ENCODE measurements at regions of chr5 and their contacts with region 1.

Region 1: DNA sequence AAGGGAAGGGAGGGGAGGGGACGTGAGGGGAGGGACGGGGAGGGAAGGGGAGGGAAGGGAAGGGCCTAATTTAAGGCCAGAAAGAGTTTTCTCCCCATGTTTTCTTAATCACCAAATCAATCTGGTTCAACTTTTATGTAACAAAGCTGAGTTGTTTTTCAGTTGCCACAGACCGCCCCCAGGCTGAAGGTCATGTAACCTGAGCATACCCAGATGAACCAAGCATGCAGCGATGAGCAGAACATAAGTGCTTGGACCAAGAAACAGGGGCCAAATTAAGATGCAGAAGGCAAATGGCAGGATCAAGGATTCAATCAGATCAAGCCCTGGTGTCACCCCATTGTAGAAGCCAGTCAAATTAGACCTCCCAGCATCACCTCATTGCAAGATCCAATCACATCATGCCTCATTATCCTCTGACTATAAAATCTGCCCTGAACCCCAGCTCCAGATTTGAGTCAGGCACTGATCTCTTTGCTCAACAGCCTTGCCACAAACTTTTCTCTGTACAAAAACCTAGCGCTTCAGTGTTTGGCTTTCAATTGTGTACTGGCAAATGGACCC is 113.5 kb upstream of the TNPO1 start:
- DNase-seq: no peak
- H3K4me3 ChIP-seq: no peak overlapping the region
- H3K27ac ChIP-seq: no peak overlapping the region
- H3K4me1 ChIP-seq: no peaks in the 10 kb centered on the region
- H3K27me3 ChIP-seq: no peaks in the 10 kb centered on the region
- CTCF ChIP-seq: no peak
- POLR2A ChIP-seq: no peak

Region 2: DNA sequence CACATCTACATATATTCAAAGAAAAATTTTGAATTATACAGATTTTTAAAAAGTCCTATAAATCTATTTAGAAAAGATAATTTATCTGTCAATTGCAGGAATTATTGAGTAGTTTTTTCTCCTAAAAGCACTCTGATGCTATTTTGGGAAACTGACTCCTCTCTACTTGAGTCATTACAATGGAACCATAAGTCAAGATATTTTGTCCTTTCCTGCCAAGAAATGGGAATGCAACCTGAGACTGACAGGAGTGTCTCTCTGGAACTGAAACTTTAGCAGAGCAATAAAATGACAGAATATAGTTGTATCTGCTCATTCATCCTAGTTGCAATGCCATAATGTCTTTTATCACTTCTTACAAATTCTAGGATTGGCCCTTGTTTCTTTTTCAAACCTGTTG is 935.3 kb before region 1 on chr5:
- CTCF ChIA-PET with region 1: no interaction called
- POLR2A ChIA-PET with region 1: no interaction called
- dilution Hi-C with region 1: no loop called
- intact Hi-C with region 1: no loop called
- DNase-seq: no peak
- H3K4me3 ChIP-seq: no peak overlapping the region
- H3K27ac ChIP-seq: no peak overlapping the region
- H3K4me1 ChIP-seq: peaks cover 24% of the 10 kb centered on the region
- H3K27me3 ChIP-seq: peaks cover 0 to 8% of the 10 kb centered on the region in 2 experiments
- CTCF ChIP-seq: no peak
- POLR2A ChIP-seq: no peak

Region 3: GRCh38 chr5:72624641-72625236 is 78.2 kb before region 1 on chr5:
- CTCF ChIA-PET with region 1: no interaction called
- POLR2A ChIA-PET with region 1: no interaction called
- dilution Hi-C with region 1: no loop called
- intact Hi-C with region 1: loop called (anchors 10 kb)
- DNase-seq: peak; percentile 83
- H3K4me3 ChIP-seq: peak overlapping the region in 1 of 3 experiments; percentile 34
- H3K27ac ChIP-seq: peak overlapping the region; percentile 68
- H3K4me1 ChIP-seq: peaks cover 19% of the 10 kb centered on the region
- H3K27me3 ChIP-seq: no peaks in the 10 kb centered on the region
- CTCF ChIP-seq: no peak
- POLR2A ChIP-seq: no peak

Measured in endothelial cell of umbilical vein (primary cell).